B cell (primary cell): ENCODE measurements at regions of chr16 and their contacts with region 1.

Region 1: DNA sequence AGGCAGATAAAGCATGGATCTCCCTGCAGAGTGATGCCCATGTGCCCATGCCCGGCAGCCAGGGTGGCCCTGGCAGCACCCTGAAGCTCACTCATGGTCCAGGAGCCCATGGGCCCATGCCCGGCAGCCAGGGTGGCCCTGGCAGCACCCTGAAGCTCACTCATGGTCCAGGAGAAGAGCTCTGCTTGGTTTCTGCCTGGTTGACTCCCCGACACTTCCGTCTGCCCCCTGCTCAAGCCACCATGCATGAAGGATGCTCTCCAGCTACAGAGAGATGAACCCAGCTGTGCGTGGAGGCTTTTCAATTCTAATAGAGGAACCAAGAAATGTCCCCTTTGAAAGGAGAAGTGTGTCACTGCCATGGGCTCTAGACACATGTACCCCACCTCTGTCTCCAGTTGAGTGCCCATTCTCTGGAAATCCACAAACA is 8.7 kb downstream of the CCL17 start:
- DNase-seq: peak; percentile 90
- ATAC-seq: peak; percentile 85
- H3K4me3 ChIP-seq: no peak overlapping the region
- H3K4me3 Mint-ChIP-seq: peak overlapping the region; percentile 30
- H3K27ac ChIP-seq: peak overlapping the region; percentile 74 to 80
- H3K27ac Mint-ChIP-seq: peak overlapping the region; percentile 71
- H3K4me1 ChIP-seq: peaks cover 47 to 58% of the 10 kb centered on the region in 2 donors
- H3K4me1 Mint-ChIP-seq: peaks cover 61% of the 10 kb centered on the region
- H3K27me3 ChIP-seq: no peaks in the 10 kb centered on the region
- H3K27me3 Mint-ChIP-seq: no peaks in the 10 kb centered on the region
- CTCF ChIP-seq: no peak

Region 2: DNA sequence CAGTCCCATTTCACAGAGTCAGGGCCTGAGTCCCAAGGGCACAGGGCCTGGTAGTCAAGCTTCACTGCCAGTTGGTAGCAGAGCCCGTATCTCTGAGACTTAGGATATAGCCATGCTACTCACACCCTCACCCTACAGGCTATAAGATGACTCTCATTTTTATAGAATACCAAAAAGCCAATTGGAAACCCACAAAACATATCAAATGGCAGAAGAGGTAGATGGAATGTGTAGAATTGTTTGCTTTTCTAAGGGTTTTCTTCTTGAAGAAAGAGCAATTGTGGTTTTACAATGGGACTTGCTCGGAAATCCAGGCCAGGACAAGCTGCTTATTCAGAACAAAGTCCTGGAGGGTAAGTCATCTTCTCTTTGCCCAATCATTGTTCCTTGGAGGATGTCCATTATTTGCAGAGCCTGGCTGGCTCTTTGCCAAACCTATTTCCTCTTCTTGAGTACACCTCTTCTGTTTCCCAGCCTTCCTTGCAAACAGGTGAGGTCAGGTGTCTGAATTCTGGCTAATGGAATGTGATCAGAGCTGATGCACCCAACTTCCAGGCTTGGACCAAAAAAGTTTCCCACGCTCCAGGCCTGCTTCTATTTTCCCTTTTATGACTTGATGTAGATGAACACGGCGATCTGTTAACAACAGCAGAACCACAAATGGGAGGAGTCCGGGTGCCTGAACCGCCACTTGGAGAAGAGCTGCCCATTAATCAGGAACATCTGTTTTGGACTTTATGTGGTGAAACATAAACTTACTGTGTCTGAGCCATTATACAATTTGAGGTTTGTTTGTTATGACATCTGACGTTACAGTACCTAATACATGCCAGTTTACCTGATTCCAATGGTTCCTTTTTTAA is 71.6 kb before region 1 on chr16:
- CTCF ChIA-PET with region 1: interaction called, 8 read pairs
- POLR2A ChIA-PET with region 1: no interaction called
- intact Hi-C with region 1: loop called (anchors 1 kb)
- DNase-seq: no peak
- ATAC-seq: no peak
- H3K4me3 ChIP-seq: no peak overlapping the region
- H3K4me3 Mint-ChIP-seq: peak overlapping the region; percentile 52
- H3K27ac ChIP-seq: no peak overlapping the region
- H3K27ac Mint-ChIP-seq: peak overlapping the region; percentile 23
- H3K4me1 ChIP-seq: peaks cover 22 to 31% of the 10 kb centered on the region in 2 donors
- H3K4me1 Mint-ChIP-seq: peaks cover 40% of the 10 kb centered on the region
- H3K27me3 ChIP-seq: peaks cover 0 to 6% (median 0%) of the 10 kb centered on the region in 4 experiments
- H3K27me3 Mint-ChIP-seq: peaks cover 11% of the 10 kb centered on the region
- CTCF ChIP-seq: no peak

Region 3: GRCh38 chr16:57377080-57377841 is 36.1 kb before region 1 on chr16:
- CTCF ChIA-PET with region 1: interaction called, 10 read pairs
- POLR2A ChIA-PET with region 1: interaction called, 4 read pairs
- intact Hi-C with region 1: loop called (anchors 1 kb)
- DNase-seq: peak; percentile 66
- ATAC-seq: peak; percentile 65
- H3K4me3 ChIP-seq: no peak overlapping the region
- H3K4me3 Mint-ChIP-seq: peak overlapping the region; percentile 40
- H3K27ac ChIP-seq: no peak overlapping the region
- H3K27ac Mint-ChIP-seq: peak overlapping the region; percentile 75
- H3K4me1 ChIP-seq: peaks cover 21 to 28% of the 10 kb centered on the region in 2 donors
- H3K4me1 Mint-ChIP-seq: peaks cover 30% of the 10 kb centered on the region
- H3K27me3 ChIP-seq: peaks cover 0 to 5% (median 0%) of the 10 kb centered on the region in 4 experiments
- H3K27me3 Mint-ChIP-seq: no peaks in the 10 kb centered on the region
- CTCF ChIP-seq: no peak

Region 4: DNA sequence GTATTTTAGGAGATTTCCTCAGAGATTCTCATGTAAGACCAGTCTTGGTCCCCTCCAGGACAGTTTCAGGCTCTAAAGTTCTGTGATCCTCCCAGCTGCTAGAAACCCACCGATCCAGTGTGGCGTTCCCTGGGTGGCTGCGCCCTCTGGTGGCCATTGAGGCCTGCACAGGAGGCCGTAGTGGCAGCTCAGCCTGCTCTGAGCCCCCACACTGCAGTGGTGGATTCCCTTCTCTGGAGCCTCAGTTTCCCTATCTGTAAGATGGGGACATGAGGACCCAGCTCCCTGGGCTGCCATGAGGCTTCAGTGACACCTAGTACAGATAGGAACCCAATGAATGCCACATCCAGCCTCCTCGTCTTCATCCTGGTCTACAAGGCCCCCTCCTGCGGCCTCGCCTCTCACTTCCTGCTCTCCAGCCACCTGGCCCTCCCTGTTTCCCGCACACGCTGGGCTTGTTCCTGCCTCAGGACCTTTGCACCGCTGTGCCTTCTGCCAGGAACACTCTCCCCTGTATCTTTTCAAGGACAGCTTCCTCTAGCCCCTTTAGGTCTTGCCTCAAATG is 106.6 kb after region 1 on chr16:
- CTCF ChIA-PET with region 1: interaction called, 83 read pairs
- POLR2A ChIA-PET with region 1: interaction called, 6 read pairs
- intact Hi-C with region 1: no loop called
- DNase-seq: peak; percentile 83
- ATAC-seq: peak; percentile 76
- H3K4me3 ChIP-seq: no peak overlapping the region
- H3K4me3 Mint-ChIP-seq: no peak overlapping the region
- H3K27ac ChIP-seq: no peak overlapping the region
- H3K27ac Mint-ChIP-seq: no peak overlapping the region
- H3K4me1 ChIP-seq: peaks cover 26 to 39% of the 10 kb centered on the region in 2 donors
- H3K4me1 Mint-ChIP-seq: peaks cover 38% of the 10 kb centered on the region
- H3K27me3 ChIP-seq: no peaks in the 10 kb centered on the region
- H3K27me3 Mint-ChIP-seq: no peaks in the 10 kb centered on the region
- CTCF ChIP-seq: peak; percentile 98

Region 5: GRCh38 chr16:57648590-57649442 is 235.5 kb after region 1 on chr16:
- CTCF ChIA-PET with region 1: interaction called, 30 read pairs
- POLR2A ChIA-PET with region 1: no interaction called
- intact Hi-C with region 1: no loop called
- DNase-seq: peak; percentile 83
- ATAC-seq: peak; percentile 82
- H3K4me3 ChIP-seq: no peak overlapping the region
- H3K4me3 Mint-ChIP-seq: no peak overlapping the region
- H3K27ac ChIP-seq: peak overlapping the region; percentile 36 to 61
- H3K27ac Mint-ChIP-seq: peak overlapping the region; percentile 53
- H3K4me1 ChIP-seq: peaks cover 23 to 27% of the 10 kb centered on the region in 2 donors
- H3K4me1 Mint-ChIP-seq: peaks cover 32% of the 10 kb centered on the region
- H3K27me3 ChIP-seq: peaks cover 0 to 3% (median 0%) of the 10 kb centered on the region in 4 experiments
- H3K27me3 Mint-ChIP-seq: no peaks in the 10 kb centered on the region
- CTCF ChIP-seq: peak; percentile 99